ENCODE measurements at regions of chr11 and their contacts with region 1.

Region 1: GRCh38 chr11:48001438-48002021 is 21.2 kb downstream of the PTPRJ start:
- DNase-seq: no peak
- H3K4me3 ChIP-seq: no peak overlapping the region
- H3K27ac ChIP-seq: no peak overlapping the region
- H3K4me1 ChIP-seq: peaks cover 34% of the 10 kb centered on the region
- H3K27me3 ChIP-seq: no peaks in the 10 kb centered on the region
- CTCF ChIP-seq: no peak
- POLR2A ChIP-seq: no peak

Region 2: GRCh38 chr11:48034926-48035871 is 33.7 kb after region 1 on chr11:
- intact Hi-C with region 1: loop called (anchors 1 kb)
- DNase-seq: no peak
- H3K4me3 ChIP-seq: no peak overlapping the region
- H3K27ac ChIP-seq: no peak overlapping the region
- H3K4me1 ChIP-seq: peaks cover 11% of the 10 kb centered on the region
- H3K27me3 ChIP-seq: no peaks in the 10 kb centered on the region
- CTCF ChIP-seq: no peak
- POLR2A ChIP-seq: no peak

Region 3: GRCh38 chr11:48116437-48117228 is 115.1 kb after region 1 on chr11:
- intact Hi-C with region 1: no loop called
- DNase-seq: no peak
- H3K4me3 ChIP-seq: no peak overlapping the region
- H3K27ac ChIP-seq: no peak overlapping the region
- H3K4me1 ChIP-seq: no peaks in the 10 kb centered on the region
- H3K27me3 ChIP-seq: no peaks in the 10 kb centered on the region
- CTCF ChIP-seq: no peak
- POLR2A ChIP-seq: no peak

Measured in vagina (tissue), 2 donors.